H1 (cell line): ENCODE measurements at regions of chr14 and their contacts with region 1.

Region 1: DNA sequence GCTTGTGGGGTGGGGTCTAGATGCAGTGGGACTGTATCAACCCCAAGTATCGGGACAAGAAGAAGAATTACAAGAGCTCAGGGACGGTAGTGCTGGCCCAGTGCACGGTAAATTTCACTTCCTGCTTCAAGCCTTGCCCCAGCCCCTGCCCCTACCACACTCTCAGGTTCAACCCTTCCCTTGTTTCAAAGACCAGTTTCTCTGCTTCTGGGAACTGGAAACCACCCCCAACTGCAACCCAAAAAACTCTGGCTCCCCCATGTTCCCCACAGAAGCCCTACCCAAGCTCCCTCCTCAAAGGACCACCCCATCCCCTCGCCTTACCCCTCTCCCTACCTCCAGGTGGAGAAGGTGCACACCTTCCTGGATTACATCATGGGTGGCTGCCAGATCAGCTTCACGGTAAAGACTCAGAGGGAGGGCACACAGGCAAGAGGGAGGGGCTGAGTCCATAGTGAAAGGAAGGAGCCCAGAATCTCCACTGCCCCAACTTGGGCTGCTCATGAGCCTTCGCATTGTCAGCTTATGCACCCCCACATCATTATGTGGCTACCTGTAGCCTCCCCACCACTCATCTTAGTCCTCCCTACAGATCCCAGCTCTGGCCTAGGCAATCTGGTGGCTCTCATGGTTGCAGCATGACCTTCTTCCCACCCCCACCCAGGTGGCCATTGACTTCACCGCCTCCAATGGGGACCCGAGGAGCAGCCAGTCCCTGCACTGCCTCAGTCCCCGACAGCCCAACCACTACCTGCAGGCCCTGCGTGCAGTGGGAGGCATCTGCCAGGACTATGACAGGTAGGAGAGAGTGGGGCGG is 4.3 kb downstream of the CPNE6 start:
- DNase-seq: no peak
- H3K4me3 ChIP-seq: no peak overlapping the region
- H3K27ac ChIP-seq: no peak overlapping the region
- H3K4me1 ChIP-seq: peaks cover 0 to 11% (median 7%) of the 10 kb centered on the region in 4 experiments; a peak in 6 of 7 replicates
- H3K27me3 ChIP-seq: no peaks in the 10 kb centered on the region
- CTCF ChIP-seq: no peak
- EP300 ChIP-seq: no peak
- POLR2A ChIP-seq: no peak
- RAD21 ChIP-seq: no peak

Region 2: GRCh38 chr14:24064091-24064749 is 11.5 kb before region 1 on chr14:
- CTCF ChIA-PET with region 1: interaction called, 61 read pairs
- POLR2A ChIA-PET with region 1: interaction called, 36 read pairs
- DNase-seq: no peak
- H3K4me3 ChIP-seq: no peak overlapping the region
- H3K27ac ChIP-seq: no peak overlapping the region
- H3K4me1 ChIP-seq: no peaks in the 10 kb centered on the region
- H3K27me3 ChIP-seq: no peaks in the 10 kb centered on the region; a peak in 1 of 7 replicates
- CTCF ChIP-seq: no peak
- EP300 ChIP-seq: no peak
- POLR2A ChIP-seq: no peak
- RAD21 ChIP-seq: no peak

Region 3: GRCh38 chr14:24251880-24252288 is 176.2 kb after region 1 on chr14:
- CTCF ChIA-PET with region 1: no interaction called
- POLR2A ChIA-PET with region 1: no interaction called
- DNase-seq: no peak
- H3K4me3 ChIP-seq: no peak overlapping the region
- H3K27ac ChIP-seq: no peak overlapping the region
- H3K4me1 ChIP-seq: no peaks in the 10 kb centered on the region
- H3K27me3 ChIP-seq: no peaks in the 10 kb centered on the region
- CTCF ChIP-seq: peak in 1 of 3 experiments; percentile 13; a peak in 1 of 4 replicates
- EP300 ChIP-seq: no peak
- POLR2A ChIP-seq: no peak
- RAD21 ChIP-seq: no peak

Region 4: DNA sequence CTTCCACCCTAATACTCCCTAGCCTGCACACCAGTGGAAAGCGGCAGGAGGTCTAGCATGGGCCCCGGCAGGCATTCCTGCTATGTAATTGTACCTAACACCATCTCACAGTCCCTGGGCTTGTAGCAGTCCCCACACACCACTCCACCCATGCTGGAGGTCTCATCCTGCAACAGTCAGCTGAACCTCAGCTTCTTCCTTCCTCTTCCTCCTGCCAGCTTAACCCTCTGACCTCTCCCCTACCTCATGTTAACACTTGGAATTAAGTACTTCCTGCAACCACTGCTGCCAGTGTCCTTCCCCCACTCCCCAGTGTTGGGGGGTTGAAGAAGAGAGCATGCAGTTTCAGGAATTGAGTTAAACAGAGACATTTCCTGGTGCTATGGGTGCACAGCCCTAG is 251.6 kb after region 1 on chr14:
- CTCF ChIA-PET with region 1: no interaction called
- POLR2A ChIA-PET with region 1: no interaction called
- DNase-seq: no peak
- H3K4me3 ChIP-seq: no peak overlapping the region
- H3K27ac ChIP-seq: no peak overlapping the region
- H3K4me1 ChIP-seq: peaks cover 0 to 4% (median under 1%) of the 10 kb centered on the region in 4 experiments; a peak in 4 of 7 replicates
- H3K27me3 ChIP-seq: peaks cover 0 to 44% (median 13%) of the 10 kb centered on the region in 4 experiments; a peak in 5 of 7 replicates
- CTCF ChIP-seq: no peak
- EP300 ChIP-seq: no peak
- POLR2A ChIP-seq: no peak
- RAD21 ChIP-seq: no peak